GM10248 (cell line): ENCODE measurements at regions of chr2 and their contacts with region 1.

Region 1: DNA sequence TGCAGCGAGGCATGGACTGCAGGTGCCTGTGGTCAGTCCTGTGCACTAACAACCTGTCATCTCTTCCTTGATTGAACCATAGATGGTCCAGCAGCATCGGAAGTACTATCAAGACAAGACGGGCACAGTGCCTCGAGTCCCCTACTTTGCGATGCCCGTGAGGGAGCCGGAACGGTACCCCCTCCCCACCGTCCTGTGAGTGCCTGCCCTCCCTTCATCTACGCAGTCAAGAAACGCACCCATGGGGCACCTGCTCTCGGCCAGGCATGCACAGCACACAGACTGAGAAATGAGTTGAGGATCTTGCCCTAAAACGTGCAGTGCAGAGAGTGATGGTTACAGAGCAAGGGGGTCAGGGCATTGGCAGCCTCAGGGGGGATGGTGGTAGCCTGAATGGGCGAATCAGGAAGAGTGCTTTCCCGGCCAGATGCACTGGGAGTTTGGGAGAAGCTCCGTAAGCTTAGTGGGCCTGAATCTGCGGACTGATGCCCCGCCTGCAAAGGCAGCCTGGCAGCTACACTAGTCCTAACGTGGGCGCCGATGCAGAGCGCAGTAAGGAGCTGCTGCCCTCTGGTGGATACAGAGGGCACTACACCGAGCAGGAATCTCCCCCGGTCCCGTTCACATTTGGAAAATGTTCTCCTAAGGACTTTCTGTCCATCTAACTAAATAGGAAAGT is 63.6 kb downstream of the CIB4 start:
- DNase-seq: peak; percentile 86
- CTCF ChIP-seq: peak; percentile 92

Region 2: GRCh38 chr2:25951071-25951547 is 626.5 kb before region 1 on chr2:
- CTCF ChIA-PET with region 1: interaction called, 17 read pairs
- POLR2A ChIA-PET with region 1: no interaction called
- DNase-seq: peak; percentile 84
- CTCF ChIP-seq: peak; percentile 93

Region 3: GRCh38 chr2:26196683-26197418 is 380.7 kb before region 1 on chr2:
- CTCF ChIA-PET with region 1: no interaction called
- POLR2A ChIA-PET with region 1: no interaction called
- DNase-seq: peak; percentile 46
- CTCF ChIP-seq: no peak

Region 4: GRCh38 chr2:26422406-26422805 is 155.2 kb before region 1 on chr2:
- CTCF ChIA-PET with region 1: no interaction called
- POLR2A ChIA-PET with region 1: no interaction called
- DNase-seq: no peak
- CTCF ChIP-seq: no peak

Region 5: GRCh38 chr2:26509141-26509540 is 68.4 kb before region 1 on chr2:
- CTCF ChIA-PET with region 1: interaction called, 23 read pairs
- POLR2A ChIA-PET with region 1: no interaction called
- DNase-seq: no peak
- CTCF ChIP-seq: no peak

Region 6: GRCh38 chr2:26591619-26592505 is 14.3 kb after region 1 on chr2:
- CTCF ChIA-PET with region 1: interaction called, 46 read pairs
- POLR2A ChIA-PET with region 1: no interaction called
- DNase-seq: no peak
- CTCF ChIP-seq: no peak

Region 7: GRCh38 chr2:26605195-26605998 is 27.8 kb after region 1 on chr2:
- CTCF ChIA-PET with region 1: interaction called, 16 read pairs
- POLR2A ChIA-PET with region 1: no interaction called
- DNase-seq: peak; percentile 64
- CTCF ChIP-seq: peak; percentile 74